ENCODE measurements at regions of chr2 and their contacts with region 1.

Region 1: GRCh38 chr2:236512902-236513435 is 56.7 kb upstream of the ACKR3 start:
- DNase-seq: peak; percentile 58
- H3K4me3 ChIP-seq: no peak overlapping the region
- H3K27ac ChIP-seq: no peak overlapping the region
- H3K4me1 ChIP-seq: peaks cover 0 to 12% (median 0%) of the 10 kb centered on the region in 4 donors
- H3K27me3 ChIP-seq: peaks cover 7% of the 10 kb centered on the region
- CTCF ChIP-seq: peak; percentile 77 to 86 (median 80)
- EP300 ChIP-seq: no peak
- POLR2A ChIP-seq: no peak

Region 2: GRCh38 chr2:236569573-236569973 is 56.6 kb after region 1 on chr2 and contains the start of gene ACKR3:
- in situ Hi-C with region 1: loop called in 1 of 4 experiments (anchors 10 kb)
- intact Hi-C with region 1: loop called (anchors 2 kb)
- DNase-seq: peak; percentile 66
- H3K4me3 ChIP-seq: peak within 1 kb of the TSS; percentile 5 to 49 (median 31)
- H3K27ac ChIP-seq: peak within 1 kb of the TSS; percentile 84 to 87 (median 86)
- H3K4me1 ChIP-seq: peaks cover 5 to 35% (median 22%) of the 10 kb centered on the region in 4 donors
- H3K27me3 ChIP-seq: peaks cover 53% of the 10 kb centered on the region
- CTCF ChIP-seq: peak in 4 of 5 experiments; percentile 23 to 38 (median 28)
- EP300 ChIP-seq: no peak
- POLR2A ChIP-seq: peak; percentile 77
- total RNA-seq, gene ACKR3: 4.2 to 16.5 (median 7.7) TPM

Region 3: GRCh38 chr2:237026981-237027711 is 514.2 kb after region 1 on chr2:
- in situ Hi-C with region 1: loop called in 1 of 4 experiments (anchors 25 kb)
- intact Hi-C with region 1: loop called (anchors 10 kb)
- DNase-seq: peak; percentile 71
- H3K4me3 ChIP-seq: no peak overlapping the region
- H3K27ac ChIP-seq: no peak overlapping the region
- H3K4me1 ChIP-seq: peaks cover 0 to 7% (median 4%) of the 10 kb centered on the region in 4 donors
- H3K27me3 ChIP-seq: no peaks in the 10 kb centered on the region
- CTCF ChIP-seq: peak; percentile 76 to 91 (median 82)
- EP300 ChIP-seq: no peak
- POLR2A ChIP-seq: no peak